Spleen (tissue), 13 donors: ENCODE measurements at regions of chr6 and their contacts with region 1.

Region 1: DNA sequence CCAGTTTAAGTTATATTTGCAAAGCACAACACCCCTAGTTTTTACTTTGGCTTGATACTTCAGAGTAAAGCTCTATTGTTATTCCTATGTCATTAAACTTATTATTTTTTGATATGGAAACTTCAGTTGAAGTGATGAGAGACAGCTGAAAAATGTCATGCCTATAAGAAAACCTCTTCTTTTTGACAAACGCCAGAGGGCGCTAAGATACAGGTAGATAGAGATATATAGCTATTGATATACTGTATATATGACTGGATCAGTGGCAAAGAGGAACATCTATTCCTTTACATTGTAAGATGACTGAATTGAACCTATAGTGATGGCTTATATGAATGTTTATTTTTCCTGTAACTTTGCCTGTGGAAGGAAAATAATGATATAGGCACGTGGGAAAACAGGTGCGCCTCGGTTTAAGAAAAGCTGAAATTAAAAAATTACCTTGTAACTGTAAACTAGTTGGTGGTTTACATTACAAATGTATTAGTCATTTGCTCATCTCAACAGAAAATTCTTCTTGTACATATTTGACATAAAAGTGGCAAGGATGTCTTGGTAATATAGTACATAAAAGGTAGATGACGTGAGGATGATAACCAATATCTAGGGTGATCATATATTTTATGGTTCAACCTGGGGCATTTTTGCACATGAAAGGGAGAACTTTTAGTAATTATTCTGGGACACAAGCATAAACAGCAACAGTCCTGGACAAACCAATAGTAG is 74.1 kb downstream of the LAMA4 start:
- DNase-seq: no peak
- H3K4me3 ChIP-seq: no peak overlapping the region
- H3K27ac ChIP-seq: no peak overlapping the region
- H3K4me1 ChIP-seq: no peaks in the 10 kb centered on the region
- H3K27me3 ChIP-seq: peaks cover 0 to 73% (median 10%) of the 10 kb centered on the region in 7 donors
- CTCF ChIP-seq: peak in 10 of 11 experiments; percentile 20 to 72 (median 60)
- POLR2A ChIP-seq: no peak

Region 2: GRCh38 chr6:112311950-112312547 is 131.8 kb after region 1 on chr6:
- intact Hi-C with region 1: loop called (anchors 2 kb)
- DNase-seq: no peak
- H3K4me3 ChIP-seq: no peak overlapping the region
- H3K27ac ChIP-seq: no peak overlapping the region
- H3K4me1 ChIP-seq: peaks cover 0 to 10% (median 7%) of the 10 kb centered on the region in 6 donors
- H3K27me3 ChIP-seq: peaks cover 0 to 56% (median 0%) of the 10 kb centered on the region in 7 donors
- CTCF ChIP-seq: peak in 9 of 11 experiments; percentile 21 to 57 (median 50)
- POLR2A ChIP-seq: no peak

Region 3: DNA sequence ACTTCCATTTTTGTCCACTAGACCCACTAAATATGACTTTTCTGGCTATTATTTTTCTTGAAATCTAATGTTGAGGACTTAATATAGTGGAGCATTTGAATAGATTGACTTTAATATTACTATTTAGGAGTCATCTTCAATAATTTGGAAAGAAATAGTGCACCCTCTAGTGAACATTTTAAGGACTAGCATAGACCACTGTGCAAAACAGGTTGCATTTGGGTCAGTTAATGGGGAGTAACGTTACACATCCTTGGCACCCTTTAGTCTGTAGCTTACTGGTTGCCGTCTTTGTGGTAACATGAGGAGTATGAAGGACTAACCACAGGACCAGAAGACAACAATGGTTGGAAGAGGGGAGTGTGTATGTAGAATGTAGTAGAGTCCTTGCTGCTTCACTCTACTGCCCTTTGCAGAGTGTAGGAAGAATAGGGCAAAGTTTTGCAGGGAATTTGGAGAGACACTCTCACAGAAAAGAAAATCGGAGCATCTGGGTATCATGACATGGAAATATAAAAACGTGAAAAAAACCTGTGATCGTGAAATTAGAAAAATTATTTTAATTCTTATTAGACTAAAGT is 192.1 kb after region 1 on chr6:
- intact Hi-C with region 1: loop called (anchors 5 kb)
- DNase-seq: no peak
- H3K4me3 ChIP-seq: no peak overlapping the region
- H3K27ac ChIP-seq: no peak overlapping the region
- H3K4me1 ChIP-seq: no peaks in the 10 kb centered on the region
- H3K27me3 ChIP-seq: peaks cover 0 to 26% (median 2%) of the 10 kb centered on the region in 7 donors
- CTCF ChIP-seq: peak in 4 of 11 experiments; percentile 8 to 50 (median 28)
- POLR2A ChIP-seq: no peak

Region 4: DNA sequence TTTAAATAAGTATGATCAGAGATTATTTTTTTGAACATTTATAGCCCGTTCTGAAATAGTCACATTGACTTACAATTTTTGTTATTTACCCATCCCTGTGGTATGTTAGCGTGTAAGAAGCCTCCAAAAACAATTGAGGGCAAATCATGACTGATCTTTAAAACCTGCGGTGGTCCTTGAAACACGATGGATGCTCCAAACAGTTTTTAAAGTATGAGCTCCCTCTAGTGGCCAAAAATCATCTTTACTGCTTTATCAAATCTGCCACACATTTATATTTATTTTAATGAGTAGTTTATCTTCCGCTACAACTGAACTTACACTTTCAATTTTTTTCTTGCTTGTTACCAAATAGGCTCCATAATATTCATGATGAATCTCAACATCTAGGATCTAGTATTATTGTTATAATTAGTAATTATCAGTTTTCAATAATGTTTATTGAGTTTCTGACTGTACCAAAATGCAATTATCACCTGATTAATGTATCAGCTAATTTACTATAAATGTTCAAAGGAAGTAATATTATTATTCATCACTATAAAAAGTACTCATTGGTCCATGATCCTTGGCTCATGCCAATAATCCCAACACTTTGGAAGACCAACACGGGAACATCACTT is 1729.1 kb after region 1 on chr6:
- intact Hi-C with region 1: loop called (anchors 10 kb)
- DNase-seq: no peak
- H3K4me3 ChIP-seq: no peak overlapping the region
- H3K27ac ChIP-seq: no peak overlapping the region
- H3K4me1 ChIP-seq: peaks cover 0 to 11% (median 6%) of the 10 kb centered on the region in 6 donors
- H3K27me3 ChIP-seq: no peaks in the 10 kb centered on the region
- CTCF ChIP-seq: peak in 10 of 11 experiments; percentile 39 to 76 (median 69)
- POLR2A ChIP-seq: no peak